HEK293 (cell line): ENCODE measurements at regions of chr5 and their contacts with region 1.

Region 1: DNA sequence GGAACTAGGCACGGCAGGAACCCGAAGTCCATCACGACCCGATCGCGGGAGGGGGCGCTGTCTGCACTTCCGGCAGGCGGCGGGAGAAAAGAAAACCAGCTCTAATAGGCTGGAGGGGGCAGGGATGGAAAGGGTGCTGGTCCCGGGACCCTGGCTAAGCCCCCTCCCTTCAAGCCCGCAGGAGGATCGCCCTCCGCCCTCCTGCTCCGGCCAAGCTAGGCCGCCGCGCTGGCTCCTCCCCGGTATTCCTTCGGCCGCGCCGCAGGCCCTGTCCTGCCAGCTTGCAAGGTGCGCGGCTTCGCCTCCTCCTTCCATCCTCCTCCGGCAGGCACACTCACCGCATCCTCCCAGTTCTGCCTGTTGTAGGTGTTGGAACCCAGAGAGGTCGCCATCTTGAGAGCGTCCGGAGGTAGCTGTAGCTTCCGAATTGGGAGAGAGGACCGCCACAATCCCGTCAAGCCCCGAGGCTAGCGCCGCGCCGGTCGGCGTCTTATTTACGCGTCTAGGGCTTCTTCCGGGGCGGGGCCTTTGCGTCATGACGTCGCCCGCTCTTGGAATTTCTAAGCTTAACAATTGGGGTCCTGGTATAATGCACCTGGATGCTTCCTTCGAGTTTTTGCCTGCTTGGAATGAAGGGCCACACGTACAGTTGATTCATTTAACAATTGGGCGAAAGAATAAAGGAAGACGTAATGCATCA is at the start of gene RBM22:
- H3K4me3 ChIP-seq: peak within 1 kb of the TSS; percentile 80
- H3K27ac ChIP-seq: peak within 1 kb of the TSS; percentile 90
- H3K4me1 ChIP-seq: peaks cover 2% of the 10 kb centered on the region
- CTCF ChIP-seq: peak; percentile 90

Region 2: DNA sequence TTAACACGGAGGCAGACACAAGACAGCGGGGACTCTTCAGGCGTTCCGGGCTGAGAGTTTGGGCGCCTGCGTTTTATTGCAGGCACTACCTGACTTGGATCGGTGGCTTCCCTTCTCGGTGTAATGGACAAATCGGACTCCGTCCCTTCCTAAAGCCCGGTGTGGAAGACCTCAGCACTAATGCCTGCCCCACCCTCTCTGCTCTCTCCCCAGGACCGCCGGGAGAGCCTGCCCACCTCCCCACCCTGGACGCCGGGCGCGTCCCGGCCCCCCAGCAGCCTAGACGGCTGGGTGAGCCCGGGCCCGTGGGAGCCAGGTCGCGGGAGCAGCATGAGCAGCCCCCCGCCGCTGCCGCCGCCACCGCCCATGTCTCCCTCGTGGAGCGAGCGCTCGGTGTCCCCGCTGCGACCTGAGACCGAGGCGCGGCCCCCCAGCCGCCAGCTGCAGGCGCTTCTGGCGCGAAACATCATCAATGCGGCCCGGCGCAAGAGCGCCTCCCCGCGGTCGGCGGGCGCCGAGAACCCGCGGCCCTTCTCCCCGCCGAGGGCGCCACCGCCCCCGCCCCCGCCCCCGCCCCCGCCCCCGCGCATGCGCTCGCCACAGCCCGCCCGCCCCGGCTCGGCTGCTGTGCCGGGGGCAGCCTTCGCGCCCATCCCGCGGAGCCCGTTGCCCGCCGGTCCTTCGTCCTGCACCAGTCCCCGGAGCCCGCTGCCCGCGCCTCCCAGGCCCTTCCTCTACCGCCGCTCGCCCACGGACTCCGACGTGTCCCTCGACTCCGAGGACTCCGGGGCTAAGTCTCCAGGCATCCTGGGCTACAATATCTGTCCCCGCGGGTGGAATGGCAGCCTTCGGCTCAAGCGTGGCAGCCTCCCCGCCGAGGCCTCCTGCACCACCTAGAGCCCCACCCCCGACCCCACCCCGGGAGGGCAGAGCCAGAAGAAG is 44.3 kb before region 1 on chr5:
- CTCF ChIA-PET with region 1: interaction called, 8 read pairs
- POLR2A ChIA-PET with region 1: interaction called, 13 read pairs
- H3K4me3 ChIP-seq: peak overlapping the region; percentile 55
- H3K27ac ChIP-seq: peak overlapping the region; percentile 73; the same call in 1 of the 2 replicates
- H3K4me1 ChIP-seq: no peaks in the 10 kb centered on the region
- CTCF ChIP-seq: peak; percentile 72

Region 3: GRCh38 chr5:150758531-150759333 is 58.0 kb after region 1 on chr5 and contains the start of gene DCTN4:
- CTCF ChIA-PET with region 1: interaction called, 3 read pairs
- POLR2A ChIA-PET with region 1: interaction called, 11 read pairs
- H3K4me3 ChIP-seq: peak within 1 kb of the TSS; percentile 61
- H3K27ac ChIP-seq: peak within 1 kb of the TSS; percentile 77
- H3K4me1 ChIP-seq: peaks cover 12% of the 10 kb centered on the region
- CTCF ChIP-seq: peak; percentile 74

Region 4: GRCh38 chr5:150846654-150847333 is 146.1 kb after region 1 on chr5:
- CTCF ChIA-PET with region 1: interaction called, 13 read pairs
- POLR2A ChIA-PET with region 1: interaction called, 5 read pairs
- H3K4me3 ChIP-seq: no peak overlapping the region
- H3K27ac ChIP-seq: no peak overlapping the region
- H3K4me1 ChIP-seq: no peaks in the 10 kb centered on the region
- CTCF ChIP-seq: peak; percentile 82

Region 5: DNA sequence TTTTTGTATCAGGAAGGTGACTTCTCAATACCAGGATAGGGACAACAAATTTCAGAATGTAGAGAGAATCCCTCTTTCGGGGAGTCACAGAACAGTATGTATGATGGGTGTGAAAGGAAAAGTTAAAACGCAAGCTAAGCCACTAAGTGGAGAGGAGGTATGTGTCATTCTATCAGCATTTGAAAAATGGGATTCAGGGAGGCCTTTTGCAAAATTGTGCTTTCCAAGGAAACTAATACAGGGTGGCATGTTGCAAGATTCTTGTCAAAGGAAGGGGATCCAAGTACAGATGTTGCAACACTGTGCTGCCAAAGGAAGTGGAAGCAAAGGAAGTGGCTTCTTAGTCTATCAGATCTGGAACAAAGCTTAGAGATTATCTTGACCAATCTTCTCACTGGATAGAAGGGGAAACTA is 392.7 kb after region 1 on chr5:
- CTCF ChIA-PET with region 1: no interaction called
- POLR2A ChIA-PET with region 1: no interaction called
- H3K4me3 ChIP-seq: no peak overlapping the region
- H3K27ac ChIP-seq: no peak overlapping the region
- H3K4me1 ChIP-seq: no peaks in the 10 kb centered on the region
- CTCF ChIP-seq: no peak